ENCODE measurements at regions of chr5 and their contacts with region 1.

Region 1: GRCh38 chr5:134511788-134512650 is 13.5 kb upstream of the JADE2 start:
- DNase-seq: peak; percentile 83 to 97 (median 90)
- H3K4me3 ChIP-seq: no peak overlapping the region
- H3K27ac ChIP-seq: peak overlapping the region in 1 of 2 donors; percentile 53
- H3K4me1 ChIP-seq: peaks cover 15% of the 10 kb centered on the region
- H3K27me3 ChIP-seq: no peaks in the 10 kb centered on the region
- CTCF ChIP-seq: peak in 1 of 3 donors; percentile 14
- EP300 ChIP-seq: no peak
- POLR2A ChIP-seq: no peak

Region 2: GRCh38 chr5:134420343-134420742 is 91.7 kb before region 1 on chr5:
- intact Hi-C with region 1: no loop called
- DNase-seq: no peak
- H3K4me3 ChIP-seq: no peak overlapping the region
- H3K27ac ChIP-seq: no peak overlapping the region
- H3K4me1 ChIP-seq: no peaks in the 10 kb centered on the region
- H3K27me3 ChIP-seq: no peaks in the 10 kb centered on the region
- CTCF ChIP-seq: no peak
- EP300 ChIP-seq: no peak
- POLR2A ChIP-seq: no peak

Region 3: DNA sequence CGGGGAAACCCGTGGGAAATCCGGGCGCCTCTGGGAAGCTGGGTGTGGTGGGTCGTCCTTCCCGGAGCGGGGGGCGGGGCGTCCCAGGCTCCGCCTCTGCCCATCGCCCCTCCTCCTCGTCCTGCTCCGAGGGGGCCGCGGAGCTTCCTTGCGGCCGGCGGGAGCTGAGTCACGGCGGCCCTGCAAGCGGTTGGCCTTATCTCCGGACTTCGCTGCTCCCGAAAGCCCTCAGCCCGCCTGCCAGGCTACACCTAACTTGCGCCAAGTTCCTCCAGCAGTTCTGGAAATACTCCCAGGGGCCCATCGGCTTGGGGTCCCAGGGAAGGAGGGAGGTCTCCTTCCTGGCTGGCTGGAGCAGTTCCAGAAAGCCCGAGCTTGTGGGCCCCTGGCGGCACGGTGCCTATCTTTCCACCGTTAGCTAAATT is 46.2 kb before region 1 on chr5:
- intact Hi-C with region 1: loop called in 2 of 4 experiments (anchors 5 kb)
- DNase-seq: peak; percentile 88 to 95 (median 91)
- H3K4me3 ChIP-seq: peak overlapping the region; percentile 59
- H3K27ac ChIP-seq: peak overlapping the region; percentile 18 to 81
- H3K4me1 ChIP-seq: peaks cover 13% of the 10 kb centered on the region
- H3K27me3 ChIP-seq: no peaks in the 10 kb centered on the region
- CTCF ChIP-seq: peak in 1 of 3 donors; percentile 26
- EP300 ChIP-seq: no peak
- POLR2A ChIP-seq: peak; percentile 67